ENCODE measurements at regions of chr9 and their contacts with region 1.

Region 1: GRCh38 chr9:37119907-37120842 is at the start of gene ZCCHC7:
- DNase-seq: peak; percentile 94
- H3K4me3 ChIP-seq: peak within 1 kb of the TSS; percentile 69 to 91 (median 83)
- H3K27ac ChIP-seq: peak within 1 kb of the TSS; percentile 72
- H3K4me1 ChIP-seq: peaks cover 9% of the 10 kb centered on the region
- H3K27me3 ChIP-seq: no peaks in the 10 kb centered on the region
- CTCF ChIP-seq: no peak
- POLR2A ChIP-seq: peak; percentile 66
- total RNA-seq, gene ZCCHC7: 14.8 and 17.3 TPM in 2 replicates

Region 2: DNA sequence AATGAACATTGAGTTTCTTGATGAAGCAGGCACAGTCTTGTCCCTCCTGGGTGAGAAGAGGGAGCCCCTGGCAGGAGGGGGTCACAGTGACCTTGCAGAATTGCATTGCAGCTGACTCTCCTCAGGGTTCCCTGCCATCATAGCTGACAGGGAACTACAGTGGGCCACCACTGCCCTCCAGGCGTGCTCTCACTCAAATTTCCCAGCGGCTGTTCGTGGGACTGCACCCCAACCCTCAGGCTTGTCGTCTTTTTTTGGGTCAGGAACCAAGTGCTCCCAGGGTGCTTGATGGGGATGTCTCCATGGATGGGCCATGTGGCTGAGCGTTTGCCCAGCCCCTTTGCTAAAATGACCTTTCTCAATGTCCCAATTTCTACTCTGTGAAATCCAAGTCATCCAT is 331.6 kb before region 1 on chr9:
- CTCF ChIA-PET with region 1: no interaction called
- POLR2A ChIA-PET with region 1: no interaction called
- dilution Hi-C with region 1: no loop called
- intact Hi-C with region 1: no loop called
- DNase-seq: no peak
- H3K4me3 ChIP-seq: no peak overlapping the region
- H3K27ac ChIP-seq: no peak overlapping the region
- H3K4me1 ChIP-seq: no peaks in the 10 kb centered on the region
- H3K27me3 ChIP-seq: no peaks in the 10 kb centered on the region
- CTCF ChIP-seq: peak in 1 of 2 donors; percentile 13
- POLR2A ChIP-seq: no peak

Region 3: GRCh38 chr9:37027582-37028419 is 92.4 kb before region 1 on chr9:
- CTCF ChIA-PET with region 1: no interaction called
- POLR2A ChIA-PET with region 1: no interaction called
- dilution Hi-C with region 1: no loop called
- intact Hi-C with region 1: loop called (anchors 2 kb)
- DNase-seq: peak; percentile 93
- H3K4me3 ChIP-seq: no peak overlapping the region
- H3K27ac ChIP-seq: no peak overlapping the region
- H3K4me1 ChIP-seq: peaks cover 7% of the 10 kb centered on the region
- H3K27me3 ChIP-seq: peaks cover 89 to 97% of the 10 kb centered on the region in 2 experiments
- CTCF ChIP-seq: no peak
- POLR2A ChIP-seq: no peak

Region 4: DNA sequence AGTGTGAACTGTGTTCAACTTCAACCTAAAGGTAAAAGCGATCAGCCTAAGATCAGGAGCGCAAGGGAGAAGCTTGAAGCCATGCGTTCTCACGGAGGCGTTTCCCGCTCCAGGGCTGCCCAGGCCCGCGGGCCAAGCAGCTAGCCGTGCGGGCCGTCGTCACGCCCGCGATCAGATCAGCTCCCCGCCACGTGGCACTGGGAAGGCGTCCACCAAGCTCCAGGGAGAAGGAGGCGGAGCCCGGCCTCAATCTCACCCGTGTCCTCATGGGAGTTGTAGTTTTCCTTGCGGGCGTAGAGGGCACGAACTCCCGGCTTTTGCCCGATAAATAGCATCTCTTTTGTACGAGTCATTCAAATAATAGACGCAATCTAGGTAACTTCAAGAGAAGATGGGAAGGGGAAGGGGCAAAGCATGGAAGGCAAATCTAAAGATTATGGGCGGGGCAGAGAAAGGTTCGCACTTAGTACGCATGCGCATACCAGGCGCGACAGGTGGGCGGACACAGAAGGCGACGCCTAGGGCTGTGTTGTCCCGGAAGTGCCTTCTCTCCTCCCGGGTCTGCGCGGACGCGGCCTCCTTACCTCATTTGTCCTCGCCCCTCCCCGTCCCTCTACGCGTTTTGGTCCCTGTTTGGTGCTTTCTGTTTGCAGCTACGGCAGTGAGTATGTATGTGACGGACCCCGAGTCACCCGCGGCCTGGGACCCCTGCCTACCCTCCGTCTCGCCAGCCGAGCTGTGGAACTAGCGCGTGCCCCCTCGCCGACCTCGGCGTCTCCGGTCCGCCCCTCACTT is 40.6 kb before region 1 on chr9:
- CTCF ChIA-PET with region 1: interaction called, 12 read pairs
- POLR2A ChIA-PET with region 1: interaction called, 6 read pairs
- dilution Hi-C with region 1: no loop called
- intact Hi-C with region 1: loop called (anchors 1 kb)
- DNase-seq: peak; percentile 93
- H3K4me3 ChIP-seq: peak overlapping the region; percentile 34 to 92 (median 79)
- H3K27ac ChIP-seq: peak overlapping the region; percentile 54
- H3K4me1 ChIP-seq: peaks cover 4% of the 10 kb centered on the region
- H3K27me3 ChIP-seq: peaks cover 0 to 4% of the 10 kb centered on the region in 2 experiments
- CTCF ChIP-seq: no peak
- POLR2A ChIP-seq: no peak

Region 5: DNA sequence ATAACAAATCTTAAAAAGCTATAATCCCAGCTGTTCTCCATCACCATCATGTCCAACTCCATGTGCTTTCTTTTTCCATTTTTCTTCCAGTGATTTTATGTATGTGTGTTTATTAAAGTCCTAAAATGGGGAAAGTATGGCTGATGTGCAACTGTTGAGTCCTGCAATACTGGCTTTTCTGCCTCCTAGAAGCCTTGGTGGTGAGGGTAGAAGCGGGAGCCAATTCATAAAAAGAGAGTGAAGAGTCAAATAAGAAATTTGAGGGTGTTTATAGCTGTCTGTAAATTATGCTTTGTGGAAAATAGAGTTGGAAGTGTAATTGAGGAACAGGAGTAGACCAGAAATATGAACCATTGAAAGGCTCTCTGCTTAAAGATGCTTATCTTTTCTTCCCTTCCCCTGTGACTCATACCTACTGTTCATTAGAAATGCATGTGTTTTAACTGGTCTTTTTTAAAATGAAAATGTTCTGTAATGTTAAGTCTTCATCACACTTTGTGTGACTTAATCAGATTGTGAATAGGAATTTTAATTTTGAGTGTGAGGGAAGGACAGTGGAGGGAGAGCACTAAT is 80.3 kb after region 1 on chr9:
- CTCF ChIA-PET with region 1: interaction called, 7 read pairs
- POLR2A ChIA-PET with region 1: no interaction called
- dilution Hi-C with region 1: no loop called
- intact Hi-C with region 1: loop called (anchors 2 kb)
- DNase-seq: peak; percentile 86
- H3K4me3 ChIP-seq: peak overlapping the region in 1 of 3 experiments; percentile 14
- H3K27ac ChIP-seq: peak overlapping the region; percentile 63
- H3K4me1 ChIP-seq: peaks cover 27% of the 10 kb centered on the region
- H3K27me3 ChIP-seq: no peaks in the 10 kb centered on the region
- CTCF ChIP-seq: no peak
- POLR2A ChIP-seq: no peak

Region 6: GRCh38 chr9:37209431-37210386 is 89.5 kb after region 1 on chr9:
- CTCF ChIA-PET with region 1: interaction called, 10 read pairs
- POLR2A ChIA-PET with region 1: no interaction called
- dilution Hi-C with region 1: no loop called
- intact Hi-C with region 1: no loop called
- DNase-seq: peak; percentile 26
- H3K4me3 ChIP-seq: no peak overlapping the region
- H3K27ac ChIP-seq: no peak overlapping the region
- H3K4me1 ChIP-seq: no peaks in the 10 kb centered on the region
- H3K27me3 ChIP-seq: no peaks in the 10 kb centered on the region
- CTCF ChIP-seq: peak in 1 of 2 donors; percentile 21
- POLR2A ChIP-seq: no peak

Region 7: GRCh38 chr9:37262410-37262809 is 142.2 kb after region 1 on chr9:
- CTCF ChIA-PET with region 1: interaction called, 15 read pairs
- POLR2A ChIA-PET with region 1: no interaction called
- dilution Hi-C with region 1: no loop called
- intact Hi-C with region 1: loop called (anchors 5 kb)
- DNase-seq: peak; percentile 60
- H3K4me3 ChIP-seq: no peak overlapping the region
- H3K27ac ChIP-seq: no peak overlapping the region
- H3K4me1 ChIP-seq: no peaks in the 10 kb centered on the region
- H3K27me3 ChIP-seq: no peaks in the 10 kb centered on the region
- CTCF ChIP-seq: peak; percentile 54 to 55
- POLR2A ChIP-seq: no peak

Region 8: GRCh38 chr9:37350486-37351190 is 230.5 kb after region 1 on chr9:
- CTCF ChIA-PET with region 1: no interaction called
- POLR2A ChIA-PET with region 1: no interaction called
- dilution Hi-C with region 1: no loop called
- intact Hi-C with region 1: no loop called
- DNase-seq: no peak
- H3K4me3 ChIP-seq: no peak overlapping the region
- H3K27ac ChIP-seq: no peak overlapping the region
- H3K4me1 ChIP-seq: no peaks in the 10 kb centered on the region
- H3K27me3 ChIP-seq: no peaks in the 10 kb centered on the region
- CTCF ChIP-seq: no peak
- POLR2A ChIP-seq: no peak